Thyroid gland (tissue), 4 donors: ENCODE measurements at regions of chr2 and their contacts with region 1.

Region 1: DNA sequence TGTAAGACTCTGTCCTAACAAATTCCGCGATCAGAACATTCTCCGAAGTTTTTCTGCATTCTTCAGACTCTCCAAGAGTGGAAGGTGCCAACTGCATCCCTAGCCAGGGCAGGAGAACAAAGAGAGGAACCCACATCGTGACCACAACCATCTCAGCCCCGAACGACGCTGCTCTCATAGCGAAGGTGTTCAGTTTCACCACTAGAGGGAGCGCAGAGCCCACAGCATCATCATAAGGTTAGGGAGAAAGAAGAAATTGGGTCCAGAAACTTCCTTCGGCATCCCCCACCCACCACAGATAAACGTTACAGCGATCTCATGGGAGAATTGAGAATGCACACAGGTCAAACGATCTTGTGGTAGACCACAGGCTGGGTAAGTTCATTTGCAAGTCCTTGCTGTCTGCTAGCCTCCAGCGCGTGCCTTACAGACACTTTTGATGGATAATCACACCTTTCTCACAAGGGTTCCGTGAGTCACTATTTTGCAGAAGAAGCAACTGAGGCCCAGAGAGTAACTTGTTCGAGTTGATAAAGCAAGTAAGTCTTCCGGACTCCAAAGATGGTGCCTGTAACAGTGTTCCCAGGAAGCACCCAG is 53.7 kb upstream of the ARL4C start:
- DNase-seq: peak; percentile 44 to 63
- H3K4me3 ChIP-seq: no peak overlapping the region
- H3K27ac ChIP-seq: no peak overlapping the region
- H3K4me1 ChIP-seq: no peaks in the 10 kb centered on the region
- H3K27me3 ChIP-seq: no peaks in the 10 kb centered on the region
- CTCF ChIP-seq: peak; percentile 81 to 98 (median 94)
- POLR2A ChIP-seq: no peak

Region 2: GRCh38 chr2:234218266-234219180 is 332.1 kb before region 1 on chr2:
- intact Hi-C with region 1: no loop called
- DNase-seq: no peak
- H3K4me3 ChIP-seq: no peak overlapping the region
- H3K27ac ChIP-seq: no peak overlapping the region
- H3K4me1 ChIP-seq: no peaks in the 10 kb centered on the region
- H3K27me3 ChIP-seq: no peaks in the 10 kb centered on the region
- CTCF ChIP-seq: no peak
- POLR2A ChIP-seq: no peak

Region 3: GRCh38 chr2:235106874-235107639 is 556.4 kb after region 1 on chr2:
- intact Hi-C with region 1: loop called (anchors 5 kb)
- DNase-seq: peak; percentile 62 to 72
- H3K4me3 ChIP-seq: no peak overlapping the region
- H3K27ac ChIP-seq: no peak overlapping the region
- H3K4me1 ChIP-seq: no peaks in the 10 kb centered on the region
- H3K27me3 ChIP-seq: no peaks in the 10 kb centered on the region
- CTCF ChIP-seq: peak; percentile 34 to 75 (median 59)
- POLR2A ChIP-seq: no peak